ENCODE measurements at regions of chr6 and their contacts with region 1.

Region 1: DNA sequence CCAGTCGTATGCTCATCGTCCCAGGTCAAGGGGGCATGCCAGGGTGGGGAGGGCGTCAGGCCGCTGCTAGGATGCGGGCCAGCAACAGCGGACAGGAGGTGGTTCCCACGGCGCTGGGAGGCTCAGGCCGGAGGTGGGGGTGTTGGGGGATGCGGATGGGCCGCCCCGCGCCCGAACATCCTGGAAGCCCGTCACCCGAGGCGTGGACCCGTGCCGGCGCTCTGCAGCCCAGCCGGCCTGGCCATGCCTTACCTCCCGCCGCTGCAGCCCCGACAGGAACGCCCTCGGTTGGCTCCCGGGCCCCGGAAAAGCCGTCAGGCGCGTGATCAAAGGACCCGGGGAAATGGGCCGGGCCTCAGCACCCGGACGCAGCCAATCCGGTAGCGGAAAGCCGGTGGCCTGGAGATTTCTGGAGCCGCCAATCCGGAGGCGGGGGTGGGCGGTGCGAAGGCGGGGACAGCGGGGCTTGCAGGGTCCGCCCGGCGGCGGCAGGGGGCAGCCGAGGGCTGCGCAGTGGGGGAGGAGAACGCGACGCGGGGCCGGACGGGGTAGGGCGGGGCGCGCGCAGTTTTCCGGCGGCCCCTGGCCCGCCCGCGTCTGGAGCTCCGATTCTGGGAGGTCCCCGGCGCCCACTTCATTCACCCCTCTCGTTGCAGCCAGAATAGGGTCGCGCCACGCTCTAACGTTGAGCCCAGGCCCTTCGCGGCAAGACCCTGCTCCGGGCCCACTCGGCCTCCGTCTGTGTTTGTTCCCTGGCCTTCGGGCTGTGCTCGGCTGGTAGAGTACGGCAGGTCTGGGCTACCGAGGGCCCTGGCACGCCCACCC is at the start of gene SMIM29:
- DNase-seq: peak; percentile 96 to 98 (median 97)
- H3K4me3 ChIP-seq: peak within 1 kb of the TSS; percentile 95
- H3K4me3 Mint-ChIP-seq: peak within 1 kb of the TSS; percentile 91 to 99 (median 92)
- H3K27ac ChIP-seq: peak within 1 kb of the TSS; percentile 89
- H3K27ac Mint-ChIP-seq: peak within 1 kb of the TSS; percentile 95 to 99 (median 97)
- H3K4me1 ChIP-seq: peaks cover 20% of the 10 kb centered on the region
- H3K4me1 Mint-ChIP-seq: peaks cover 21 to 52% (median 21%) of the 10 kb centered on the region in 3 donors
- H3K27me3 ChIP-seq: no peaks in the 10 kb centered on the region
- H3K27me3 Mint-ChIP-seq: peaks cover 0 to 1% of the 10 kb centered on the region in 2 donors
- total RNA-seq, gene SMIM29: 23.0 to 26.0 TPM

Region 2: DNA sequence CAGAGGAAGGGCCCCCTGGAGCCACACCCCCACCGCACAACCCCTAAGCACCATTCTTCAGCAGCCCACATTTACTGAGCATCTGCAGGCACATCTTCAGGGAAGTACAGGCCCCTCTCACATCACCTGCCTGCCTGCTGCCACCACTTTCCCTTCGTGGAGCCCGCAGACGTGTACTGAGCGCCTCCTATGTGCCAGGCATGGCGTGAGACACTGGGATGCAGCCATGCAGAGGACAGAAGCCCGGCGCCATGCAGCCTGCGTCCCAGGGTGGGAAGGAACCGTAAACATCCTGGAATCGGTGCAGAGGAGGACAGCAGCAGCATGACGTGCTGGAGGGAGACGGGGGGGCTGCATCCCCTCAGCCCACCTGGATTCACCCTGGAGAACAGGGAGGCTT is 181.1 kb before region 1 on chr6:
- CTCF ChIA-PET with region 1: no interaction called
- POLR2A ChIA-PET with region 1: no interaction called
- DNase-seq: no peak
- H3K4me3 ChIP-seq: no peak overlapping the region
- H3K4me3 Mint-ChIP-seq: no peak overlapping the region
- H3K27ac ChIP-seq: no peak overlapping the region
- H3K27ac Mint-ChIP-seq: no peak overlapping the region
- H3K4me1 ChIP-seq: no peaks in the 10 kb centered on the region
- H3K4me1 Mint-ChIP-seq: no peaks in the 10 kb centered on the region
- H3K27me3 ChIP-seq: no peaks in the 10 kb centered on the region
- H3K27me3 Mint-ChIP-seq: peaks cover 9 to 21% of the 10 kb centered on the region in 2 donors

Region 3: DNA sequence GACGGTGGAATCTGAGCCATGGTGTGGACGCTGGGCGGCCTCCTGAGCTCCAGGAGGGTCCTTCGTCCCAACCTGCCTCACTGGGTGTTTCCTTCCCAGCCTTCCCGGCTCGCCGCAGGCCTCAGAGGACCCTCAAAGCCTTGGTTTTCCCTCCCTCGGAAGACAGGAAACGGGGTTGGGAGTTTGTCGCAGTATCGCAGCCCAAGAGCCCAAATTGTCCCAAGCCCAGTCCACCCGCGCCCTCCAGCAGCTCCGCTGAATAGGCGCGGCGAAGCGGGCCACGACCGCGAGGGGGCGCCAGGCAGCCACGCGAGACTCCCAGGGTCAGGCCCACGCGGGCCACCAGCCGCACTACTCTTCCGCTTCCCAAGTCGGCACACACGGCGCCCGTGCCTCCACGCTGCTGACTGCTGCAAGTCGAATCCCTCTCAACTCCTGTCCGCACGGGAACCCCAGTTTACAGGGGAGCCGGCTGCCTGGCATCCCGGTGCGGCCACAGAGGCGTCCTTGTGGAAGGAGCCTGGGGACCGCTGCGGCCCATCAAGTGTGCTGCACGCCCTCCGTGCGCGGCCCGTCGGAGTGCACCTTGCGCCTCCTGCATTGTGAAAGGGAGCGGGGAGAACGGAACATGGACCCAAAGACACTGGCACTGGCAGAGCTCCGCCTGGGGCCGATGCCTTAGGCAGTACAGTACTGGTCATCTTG is 52.7 kb before region 1 on chr6:
- CTCF ChIA-PET with region 1: interaction called, 40 read pairs
- POLR2A ChIA-PET with region 1: interaction called, 8 read pairs
- DNase-seq: peak; percentile 80 to 91 (median 85)
- H3K4me3 ChIP-seq: peak overlapping the region; percentile 64
- H3K4me3 Mint-ChIP-seq: peak overlapping the region; percentile 78 to 93 (median 88)
- H3K27ac ChIP-seq: no peak overlapping the region
- H3K27ac Mint-ChIP-seq: peak overlapping the region in 3 of 8 donors; percentile 70 to 78 (median 78)
- H3K4me1 ChIP-seq: peaks cover 4% of the 10 kb centered on the region
- H3K4me1 Mint-ChIP-seq: peaks cover 5 to 11% (median 5%) of the 10 kb centered on the region in 3 donors
- H3K27me3 ChIP-seq: no peaks in the 10 kb centered on the region
- H3K27me3 Mint-ChIP-seq: peaks cover 0 to 2% of the 10 kb centered on the region in 2 donors

Region 4: DNA sequence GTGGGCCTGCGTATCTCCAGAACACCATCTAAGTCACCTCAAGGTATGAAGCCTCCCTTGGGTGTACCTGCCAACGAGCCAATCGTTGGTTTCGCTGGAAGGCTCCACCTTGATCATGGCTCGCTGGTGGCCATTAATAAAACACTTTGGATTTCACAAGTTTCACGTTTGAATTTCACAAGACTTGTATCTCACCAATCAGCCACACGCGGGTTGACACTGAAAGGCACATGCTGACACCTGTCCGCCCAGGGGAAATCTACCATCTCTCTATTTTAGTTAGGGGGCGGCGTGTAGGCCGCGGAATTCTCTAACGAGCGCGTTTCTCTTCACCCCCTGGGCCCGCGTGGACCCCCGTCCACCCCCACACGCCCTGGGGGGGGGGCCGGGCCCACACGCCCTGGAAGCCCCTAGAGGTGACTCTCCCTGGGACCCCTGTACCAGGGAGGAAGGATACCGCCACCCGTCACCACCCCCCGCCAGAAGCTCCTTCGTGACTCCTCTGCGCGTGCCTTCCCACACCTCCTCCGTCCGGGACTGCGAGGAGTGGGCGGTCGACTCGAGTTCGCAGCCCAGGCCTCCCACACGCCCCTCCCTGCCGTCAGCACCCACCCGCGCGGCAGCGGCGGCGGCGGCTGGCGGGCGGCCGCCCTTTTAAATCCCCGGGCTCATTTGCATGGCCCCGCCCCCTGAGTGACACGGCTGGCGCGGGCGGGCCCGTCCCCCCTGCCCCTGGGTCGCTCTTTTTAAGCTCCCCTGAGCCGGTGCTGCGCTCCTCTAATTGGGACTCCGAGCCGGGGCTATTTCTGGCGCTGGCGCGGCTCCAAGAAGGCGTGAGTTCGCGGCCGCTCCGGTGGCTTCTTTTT is 12.6 kb before region 1 on chr6 and contains the start of gene HMGA1:
- CTCF ChIA-PET with region 1: interaction called, 11 read pairs
- POLR2A ChIA-PET with region 1: interaction called, 40 read pairs
- DNase-seq: peak; percentile 83 to 94 (median 87)
- H3K4me3 ChIP-seq: peak within 1 kb of the TSS; percentile 78
- H3K4me3 Mint-ChIP-seq: peak within 1 kb of the TSS; percentile 88 to 93 (median 92)
- H3K27ac ChIP-seq: peak within 1 kb of the TSS; percentile 90
- H3K27ac Mint-ChIP-seq: peak within 1 kb of the TSS; percentile 95 to 99 (median 97)
- H3K4me1 ChIP-seq: peaks cover 27% of the 10 kb centered on the region
- H3K4me1 Mint-ChIP-seq: peaks cover 25 to 45% (median 32%) of the 10 kb centered on the region in 3 donors
- H3K27me3 ChIP-seq: no peaks in the 10 kb centered on the region
- H3K27me3 Mint-ChIP-seq: no peaks in the 10 kb centered on the region
- total RNA-seq, gene HMGA1: 490 to 506 TPM

Region 5: DNA sequence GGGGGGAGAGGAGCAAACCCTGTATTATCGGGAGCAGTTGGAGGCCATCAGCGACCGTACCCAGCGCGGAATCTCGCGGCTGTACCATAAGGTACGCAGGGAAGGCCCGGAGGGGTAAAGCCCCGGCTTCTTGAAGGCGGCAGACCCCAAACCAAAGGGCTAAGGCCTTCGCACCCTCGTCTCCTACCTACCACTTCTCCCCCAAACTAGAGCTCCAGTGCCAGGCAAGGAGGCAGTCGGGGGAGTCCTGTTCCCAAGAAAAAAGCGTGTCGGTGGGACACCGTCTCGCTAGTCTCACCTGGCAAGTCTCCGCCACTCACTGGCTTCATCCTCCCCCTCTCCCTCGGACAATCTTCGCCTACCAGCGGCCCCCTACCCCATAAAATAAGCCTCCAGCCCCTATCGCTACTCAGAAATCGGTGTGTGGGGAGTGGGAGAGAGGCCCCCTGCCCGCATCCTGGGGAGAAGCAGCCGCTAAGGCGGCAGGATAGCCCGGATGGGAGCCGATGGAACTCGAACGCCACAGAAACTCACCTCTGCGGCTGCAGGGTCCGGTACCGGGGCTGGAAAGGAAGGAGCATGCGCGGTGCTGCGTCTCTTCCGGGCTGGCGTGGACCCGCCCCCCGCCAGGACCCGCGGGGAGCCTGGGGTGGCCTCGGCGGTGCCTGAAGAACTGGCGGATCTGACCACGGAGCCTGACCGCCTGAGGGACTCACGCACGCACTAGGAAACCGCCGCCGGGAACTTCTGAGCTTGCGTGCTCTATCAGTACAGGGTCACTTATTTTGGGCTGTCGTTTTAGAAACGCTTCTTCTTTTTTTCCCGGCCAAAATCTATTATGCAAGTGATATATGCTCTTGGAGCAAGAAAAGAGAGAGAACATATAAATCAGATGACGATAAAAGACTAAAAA is 176.8 kb after region 1 on chr6 and contains the start of gene RPS10:
- CTCF ChIA-PET with region 1: interaction called, 11 read pairs
- POLR2A ChIA-PET with region 1: interaction called, 6 read pairs
- DNase-seq: peak; percentile 85 to 90 (median 86)
- H3K4me3 ChIP-seq: peak within 1 kb of the TSS; percentile 98
- H3K4me3 Mint-ChIP-seq: peak within 1 kb of the TSS; percentile 97 to 100 (median 99)
- H3K27ac ChIP-seq: peak within 1 kb of the TSS; percentile 94
- H3K27ac Mint-ChIP-seq: peak within 1 kb of the TSS; percentile 96 to 99 (median 98)
- H3K4me1 ChIP-seq: peaks cover 22% of the 10 kb centered on the region
- H3K4me1 Mint-ChIP-seq: peaks cover 26 to 45% (median 33%) of the 10 kb centered on the region in 3 donors
- H3K27me3 ChIP-seq: no peaks in the 10 kb centered on the region
- H3K27me3 Mint-ChIP-seq: no peaks in the 10 kb centered on the region
- total RNA-seq, gene RPS10: 1,999 to 2,032 TPM

Region 6: DNA sequence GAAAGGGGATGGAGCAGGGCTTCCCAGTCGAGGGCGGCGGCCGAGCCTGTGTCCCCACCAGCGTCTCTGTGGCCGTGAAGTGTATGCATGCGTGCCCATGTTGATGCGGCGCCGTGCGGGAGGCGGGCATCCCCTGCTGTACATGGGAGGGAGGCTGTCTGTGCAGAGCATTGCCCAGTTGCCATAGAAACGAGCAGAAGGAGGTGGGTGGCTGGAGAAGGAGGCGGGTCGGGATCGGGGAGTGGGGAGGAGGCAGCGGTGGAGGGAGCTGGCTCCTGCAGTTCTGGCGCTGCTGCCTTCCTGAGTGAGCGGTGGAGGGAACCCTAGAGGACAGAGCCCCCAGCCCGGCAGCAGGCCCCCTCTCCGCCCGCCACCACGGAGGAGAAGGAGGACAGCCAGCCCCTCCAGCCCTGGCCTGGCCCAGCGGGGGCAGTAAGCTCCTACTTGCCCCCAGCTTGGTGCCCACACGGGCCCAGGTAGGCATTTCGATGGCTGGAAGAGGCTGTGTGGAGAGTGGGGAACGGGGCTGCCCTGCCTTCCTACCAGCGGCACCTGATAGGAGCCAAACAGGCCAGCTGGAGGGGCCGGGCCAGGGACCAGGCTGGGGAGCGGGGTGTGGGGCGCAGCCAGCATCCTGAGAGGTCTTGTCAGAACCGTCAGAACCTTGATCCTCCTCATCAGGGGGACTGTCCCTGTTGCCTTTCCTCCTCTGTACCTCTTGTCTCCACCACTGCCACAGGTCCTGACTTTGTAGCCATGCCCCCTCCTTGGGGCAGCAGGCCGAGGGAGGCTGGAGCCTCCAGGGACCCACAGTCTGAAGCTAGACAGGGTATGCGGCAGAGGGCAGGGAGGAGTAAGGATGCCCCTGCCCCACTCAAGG is 265.9 kb after region 1 on chr6:
- CTCF ChIA-PET with region 1: no interaction called
- POLR2A ChIA-PET with region 1: no interaction called
- DNase-seq: no peak
- H3K4me3 ChIP-seq: no peak overlapping the region
- H3K4me3 Mint-ChIP-seq: no peak overlapping the region
- H3K27ac ChIP-seq: no peak overlapping the region
- H3K27ac Mint-ChIP-seq: peak overlapping the region in 2 of 8 donors; percentile 50 to 60
- H3K4me1 ChIP-seq: no peaks in the 10 kb centered on the region
- H3K4me1 Mint-ChIP-seq: peaks cover 0 to 4% (median 0%) of the 10 kb centered on the region in 3 donors
- H3K27me3 ChIP-seq: no peaks in the 10 kb centered on the region
- H3K27me3 Mint-ChIP-seq: peaks cover 0 to 8% of the 10 kb centered on the region in 2 donors

Measured in CD8-positive, alpha-beta memory T cell (primary cell).